ENCODE measurements at regions of chr11 and their contacts with region 1.

Region 1: GRCh38 chr11:77066229-77067042 is at the start of gene CAPN5:
- DNase-seq: peak; percentile 93 to 96 (median 94)
- ATAC-seq: peak; percentile 93 to 98 (median 98)
- H3K4me3 ChIP-seq: peak within 1 kb of the TSS; percentile 59 to 97 (median 78)
- H3K27ac ChIP-seq: peak within 1 kb of the TSS; percentile 42 to 96 (median 86)
- H3K4me1 ChIP-seq: peaks cover 0 to 22% (median 6%) of the 10 kb centered on the region in 12 donors
- H3K27me3 ChIP-seq: no peaks in the 10 kb centered on the region
- CTCF ChIP-seq: peak in 6 of 12 donors; percentile 6 to 50 (median 24)
- POLR2A ChIP-seq: peak; percentile 30 to 93
- total RNA-seq, gene CAPN5: 1.2 to 4.5 (median 2.3) TPM

Region 2: DNA sequence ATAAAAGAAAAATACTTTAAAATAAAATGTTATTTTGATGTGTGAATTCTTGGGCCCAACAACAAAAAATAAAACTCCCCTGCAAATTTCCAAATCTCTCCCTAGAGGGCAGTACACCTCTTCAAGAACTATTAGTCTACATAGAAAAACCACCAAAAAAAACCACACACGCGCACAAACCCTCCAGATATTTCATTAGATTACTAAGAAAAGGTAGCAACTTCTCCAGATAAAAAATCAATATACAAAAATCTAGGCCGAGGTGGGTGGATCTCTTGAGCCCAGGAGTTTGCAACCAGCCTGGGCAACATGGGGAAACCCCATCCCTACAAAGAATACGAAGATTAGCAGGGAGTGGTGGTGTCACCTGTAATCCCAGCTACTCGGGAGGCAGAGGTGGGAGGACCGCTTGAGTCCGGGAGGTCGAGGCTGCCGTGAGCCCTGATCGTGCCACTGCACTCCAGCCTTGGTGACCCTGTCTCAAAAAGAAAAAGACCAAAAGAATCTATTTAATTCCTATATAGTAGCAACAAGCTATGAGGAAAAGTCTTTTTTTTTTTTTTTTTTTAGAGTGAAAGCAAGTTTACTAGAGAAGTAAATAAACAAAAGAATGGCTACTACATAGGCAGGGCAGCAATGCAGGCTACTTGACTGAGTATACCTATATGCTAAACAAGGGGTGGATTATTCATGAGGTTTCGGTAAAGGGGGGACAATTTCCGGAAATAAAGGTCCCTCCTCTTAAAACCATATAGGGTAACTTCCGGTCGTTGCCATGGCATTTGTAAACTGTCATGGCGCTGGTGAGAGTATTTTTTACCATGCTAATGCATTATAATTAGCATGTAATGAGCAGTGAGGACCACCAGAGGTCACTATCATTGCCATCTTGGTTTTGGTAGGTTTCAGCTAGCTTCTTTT is 19.2 kb before region 1 on chr11:
- intact Hi-C with region 1: loop called in 2 of 10 experiments (anchors 1 to 2 kb)
- DNase-seq: peak in 4 of 5 donors; percentile 64 to 84 (median 77)
- ATAC-seq: peak; percentile 81 to 95 (median 88)
- H3K4me3 ChIP-seq: peak overlapping the region in 9 of 12 donors; percentile 24 to 56 (median 38)
- H3K27ac ChIP-seq: peak overlapping the region in 3 of 12 donors; percentile 9 to 49 (median 17)
- H3K4me1 ChIP-seq: peaks cover 0 to 17% (median 4%) of the 10 kb centered on the region in 12 donors
- H3K27me3 ChIP-seq: peaks cover 5 to 35% (median 18%) of the 10 kb centered on the region in 9 donors
- CTCF ChIP-seq: peak; percentile 62 to 81 (median 72)
- POLR2A ChIP-seq: no peak

Region 3: DNA sequence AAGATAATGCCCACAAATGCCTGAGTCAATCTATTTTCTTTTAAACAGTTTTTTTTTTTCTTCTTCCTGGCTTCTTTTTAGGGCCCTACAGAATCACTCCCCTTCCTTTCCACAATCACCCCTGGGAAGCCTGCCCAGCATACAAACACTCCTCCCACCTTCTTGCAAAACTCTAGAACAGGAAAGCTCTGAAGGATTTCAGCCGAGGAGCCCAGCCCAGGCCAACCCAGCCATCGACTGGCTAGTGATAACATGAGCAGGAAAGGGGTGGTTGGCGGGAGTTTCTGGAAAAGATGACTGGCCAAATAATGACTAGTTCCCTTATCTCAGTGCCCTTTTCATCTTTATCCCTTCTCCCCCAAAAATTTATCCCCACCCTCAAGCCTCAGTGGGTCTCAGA is 1190.5 kb after region 1 on chr11:
- intact Hi-C with region 1: no loop called
- DNase-seq: peak; percentile 78 to 86 (median 82)
- ATAC-seq: peak; percentile 85 to 96 (median 94)
- H3K4me3 ChIP-seq: no peak overlapping the region
- H3K27ac ChIP-seq: peak overlapping the region; percentile 29 to 78 (median 63)
- H3K4me1 ChIP-seq: peaks cover 0 to 69% (median 33%) of the 10 kb centered on the region in 12 donors
- H3K27me3 ChIP-seq: no peaks in the 10 kb centered on the region
- CTCF ChIP-seq: no peak
- POLR2A ChIP-seq: no peak